ENCODE measurements at regions of chr17 and their contacts with region 1.

Region 1: GRCh38 chr17:364308-364707 is 11.7 kb upstream of the RPH3AL start:
- DNase-seq: no peak
- ATAC-seq: no peak
- H3K4me3 ChIP-seq: no peak overlapping the region
- H3K4me3 Mint-ChIP-seq: peak overlapping the region in 1 of 3 donors; percentile 33
- H3K27ac ChIP-seq: no peak overlapping the region
- H3K27ac Mint-ChIP-seq: no peak overlapping the region
- H3K4me1 ChIP-seq: peaks cover 0 to 15% of the 10 kb centered on the region in 2 experiments
- H3K4me1 Mint-ChIP-seq: peaks cover 18 to 32% (median 24%) of the 10 kb centered on the region in 3 donors
- H3K27me3 ChIP-seq: peaks cover 0 to 13% of the 10 kb centered on the region in 2 experiments
- H3K27me3 Mint-ChIP-seq: no peaks in the 10 kb centered on the region

Region 2: GRCh38 chr17:336110-337021 is 27.9 kb before region 1 on chr17:
- CTCF ChIA-PET with region 1: no interaction called
- POLR2A ChIA-PET with region 1: no interaction called
- DNase-seq: peak in 29 of 35 experiments; percentile 10 to 68 (median 39)
- ATAC-seq: peak in 3 of 4 experiments; percentile 60 to 87 (median 66)
- H3K4me3 ChIP-seq: no peak overlapping the region
- H3K4me3 Mint-ChIP-seq: peak overlapping the region in 2 of 3 donors; percentile 47 to 67
- H3K27ac ChIP-seq: no peak overlapping the region
- H3K27ac Mint-ChIP-seq: peak overlapping the region in 1 of 2 donors; percentile 82
- H3K4me1 ChIP-seq: peaks cover 3 to 49% of the 10 kb centered on the region in 2 experiments
- H3K4me1 Mint-ChIP-seq: peaks cover 13 to 58% (median 52%) of the 10 kb centered on the region in 3 donors
- H3K27me3 ChIP-seq: peaks cover 0 to 48% of the 10 kb centered on the region in 2 experiments
- H3K27me3 Mint-ChIP-seq: peaks cover 0 to 5% of the 10 kb centered on the region in 2 donors

Region 3: GRCh38 chr17:588519-588918 is 224.2 kb after region 1 on chr17:
- CTCF ChIA-PET with region 1: no interaction called
- POLR2A ChIA-PET with region 1: no interaction called
- DNase-seq: no peak
- ATAC-seq: no peak
- H3K4me3 ChIP-seq: no peak overlapping the region
- H3K4me3 Mint-ChIP-seq: no peak overlapping the region
- H3K27ac ChIP-seq: no peak overlapping the region
- H3K27ac Mint-ChIP-seq: no peak overlapping the region
- H3K4me1 ChIP-seq: no peaks in the 10 kb centered on the region
- H3K4me1 Mint-ChIP-seq: no peaks in the 10 kb centered on the region
- H3K27me3 ChIP-seq: no peaks in the 10 kb centered on the region
- H3K27me3 Mint-ChIP-seq: no peaks in the 10 kb centered on the region

Region 4: GRCh38 chr17:927611-928461 is 563.5 kb after region 1 on chr17:
- CTCF ChIA-PET with region 1: interaction called in 1 of 2 experiments, 11 read pairs
- POLR2A ChIA-PET with region 1: no interaction called
- DNase-seq: no peak
- ATAC-seq: no peak
- H3K4me3 ChIP-seq: no peak overlapping the region
- H3K4me3 Mint-ChIP-seq: no peak overlapping the region
- H3K27ac ChIP-seq: no peak overlapping the region
- H3K27ac Mint-ChIP-seq: no peak overlapping the region
- H3K4me1 ChIP-seq: no peaks in the 10 kb centered on the region
- H3K4me1 Mint-ChIP-seq: no peaks in the 10 kb centered on the region
- H3K27me3 ChIP-seq: peaks cover 0 to 37% of the 10 kb centered on the region in 2 experiments
- H3K27me3 Mint-ChIP-seq: peaks cover 10 to 21% of the 10 kb centered on the region in 2 donors

Measured in T-cell (primary cell).